HEK293 (cell line): ENCODE measurements at regions of chr9 and their contacts with region 1.

Region 1: GRCh38 chr9:5593904-5594303 is 35.0 kb upstream of the RIC1 start:
- H3K4me3 ChIP-seq: no peak overlapping the region
- H3K27ac ChIP-seq: no peak overlapping the region
- H3K4me1 ChIP-seq: no peaks in the 10 kb centered on the region
- CTCF ChIP-seq: no peak

Region 2: GRCh38 chr9:5450359-5451091 is 143.4 kb before region 1 on chr9 and contains the start of gene CD274:
- CTCF ChIA-PET with region 1: interaction called, 26 read pairs
- POLR2A ChIA-PET with region 1: no interaction called
- H3K4me3 ChIP-seq: peak within 1 kb of the TSS; percentile 32
- H3K27ac ChIP-seq: no peak within 1 kb of the TSS
- H3K4me1 ChIP-seq: no peaks in the 10 kb centered on the region
- CTCF ChIP-seq: peak; percentile 83

Region 3: DNA sequence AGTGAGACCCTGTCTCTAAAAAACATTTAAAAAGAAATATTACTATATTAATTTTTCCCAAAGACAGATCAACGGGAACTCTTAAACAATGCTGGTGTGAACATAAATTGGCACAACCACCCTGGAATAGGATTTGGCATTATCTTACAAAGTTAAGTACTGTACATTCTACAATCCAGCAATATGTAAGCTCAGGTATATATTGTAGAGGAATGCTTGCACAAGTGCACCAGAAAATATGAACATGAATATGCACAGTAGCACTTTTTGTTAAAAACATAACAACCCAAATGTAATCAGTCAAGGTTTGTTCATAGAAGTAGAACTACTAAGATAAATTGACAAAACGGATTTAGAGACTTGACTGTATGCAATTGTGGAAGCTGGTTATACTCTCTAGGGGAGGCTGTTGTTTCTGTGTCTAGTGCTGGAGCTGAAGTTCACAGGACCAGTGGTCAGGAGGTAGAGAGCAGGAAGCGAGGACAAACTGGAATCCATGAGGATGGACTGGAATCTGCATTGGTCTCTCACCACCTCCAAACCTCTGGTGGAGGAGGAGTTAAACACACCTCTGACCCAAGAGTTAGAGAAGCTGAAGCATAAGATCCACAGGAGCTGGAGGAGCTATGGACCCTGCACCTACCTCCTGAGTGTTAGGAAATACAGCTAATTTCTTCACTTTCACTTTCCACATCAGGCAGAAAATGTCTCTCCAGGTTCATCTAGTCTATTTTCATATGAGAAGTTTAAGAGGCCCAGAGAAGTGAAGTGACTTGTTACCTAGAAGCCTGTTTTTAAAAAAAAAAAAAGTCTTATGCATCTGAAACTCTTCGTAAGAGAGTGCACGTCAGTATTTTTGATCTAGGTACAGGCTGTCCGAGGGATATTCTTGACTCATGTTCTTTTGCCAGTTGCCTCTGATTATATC is 14.7 kb after region 1 on chr9:
- CTCF ChIA-PET with region 1: interaction called, 15 read pairs
- POLR2A ChIA-PET with region 1: no interaction called
- H3K4me3 ChIP-seq: no peak overlapping the region; the same call in 1 of the 2 replicates
- H3K27ac ChIP-seq: no peak overlapping the region
- H3K4me1 ChIP-seq: no peaks in the 10 kb centered on the region
- CTCF ChIP-seq: no peak

Region 4: DNA sequence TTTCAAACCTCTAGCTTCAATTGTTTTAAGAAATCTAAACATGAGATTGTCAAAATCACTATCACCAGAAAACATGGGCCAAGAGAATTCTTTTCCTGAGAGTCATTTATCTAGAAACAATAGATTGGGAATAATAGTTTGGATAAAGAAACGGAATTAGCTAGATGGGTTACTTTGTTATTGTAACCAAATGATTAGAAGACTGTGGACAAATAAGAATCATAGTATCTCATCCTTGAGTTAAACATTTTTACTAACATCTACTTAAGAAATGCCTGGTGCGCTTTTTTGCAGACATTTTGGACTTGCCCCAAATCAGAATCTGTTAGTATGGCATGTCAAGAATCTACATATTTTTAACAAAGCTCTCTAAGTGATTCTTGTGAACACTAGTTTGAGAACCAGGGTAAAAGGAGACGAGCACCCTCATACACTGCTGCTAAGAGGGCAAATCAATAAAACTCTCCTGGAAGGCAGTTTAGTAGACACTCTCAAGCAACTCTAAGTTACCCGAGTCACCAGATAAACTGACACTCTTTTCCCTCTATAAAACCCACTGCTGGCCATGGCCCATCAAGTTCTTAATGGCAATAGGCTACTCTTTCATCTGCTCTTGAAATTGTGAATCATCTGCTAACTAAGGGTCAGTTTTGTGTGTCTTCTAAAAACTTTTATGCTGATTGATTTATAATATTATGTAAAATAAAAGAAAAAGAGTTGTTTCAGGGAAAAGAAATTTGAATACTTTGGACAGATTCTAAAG is 773.4 kb after region 1 on chr9:
- CTCF ChIA-PET with region 1: no interaction called
- POLR2A ChIA-PET with region 1: no interaction called
- H3K4me3 ChIP-seq: no peak overlapping the region
- H3K27ac ChIP-seq: no peak overlapping the region
- H3K4me1 ChIP-seq: no peaks in the 10 kb centered on the region
- CTCF ChIP-seq: no peak